ENCODE measurements at regions of chr1 and their contacts with region 1.

Region 1: DNA sequence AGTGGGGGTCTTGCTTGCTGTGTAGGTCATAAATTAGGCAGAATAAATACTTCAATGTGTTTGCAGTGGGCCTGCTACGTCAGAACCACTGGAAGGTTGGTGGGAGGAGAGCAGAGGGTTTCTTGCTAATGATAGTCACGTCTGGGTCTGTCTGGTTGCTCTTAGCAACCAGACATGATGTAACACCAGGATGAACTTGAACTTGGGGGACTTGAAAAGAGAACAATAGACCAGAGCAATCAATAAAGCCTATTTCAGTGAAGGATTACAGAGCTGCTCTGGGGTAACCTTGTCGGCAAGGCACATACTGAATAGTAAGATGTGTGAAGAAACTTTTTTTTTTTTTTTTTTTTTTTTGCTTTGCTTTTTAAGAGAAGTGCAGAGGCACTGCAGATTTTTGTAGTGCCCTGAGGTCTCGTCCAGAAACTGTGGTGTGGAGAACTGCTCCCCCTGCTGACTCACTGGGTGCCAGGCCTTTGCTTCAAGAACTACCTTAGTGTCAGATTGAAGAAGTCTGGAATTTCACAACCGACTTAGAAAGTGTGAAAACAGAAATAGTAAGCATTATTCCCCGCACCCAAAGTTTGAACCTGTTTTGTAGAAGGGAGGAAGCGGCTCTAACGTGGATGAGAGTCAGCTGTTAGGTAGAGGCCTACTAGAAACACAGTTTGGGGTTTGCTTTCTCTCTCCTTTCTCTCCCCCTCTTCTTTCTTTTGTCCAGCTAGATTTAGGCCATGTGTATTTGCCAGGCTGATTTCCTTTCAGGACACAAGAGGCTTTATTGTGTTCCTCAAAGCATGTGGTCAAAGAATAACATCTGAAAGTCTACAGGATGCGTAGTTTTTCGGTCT is 271.6 kb downstream of the TM2D1 start:
- DNase-seq: peak; percentile 85
- H3K4me3 Mint-ChIP-seq: peak overlapping the region; percentile 24
- H3K27ac Mint-ChIP-seq: peak overlapping the region; percentile 94
- H3K4me1 Mint-ChIP-seq: peaks cover 44% of the 10 kb centered on the region
- H3K27me3 Mint-ChIP-seq: no peaks in the 10 kb centered on the region
- CTCF ChIP-seq: peak; percentile 83

Region 2: GRCh38 chr1:60978421-60979357 is 474.6 kb before region 1 on chr1:
- CTCF ChIA-PET with region 1: interaction called, 4 read pairs
- intact Hi-C with region 1: loop called (anchors 1 kb)
- DNase-seq: peak; percentile 66
- H3K4me3 Mint-ChIP-seq: no peak overlapping the region
- H3K27ac Mint-ChIP-seq: no peak overlapping the region
- H3K4me1 Mint-ChIP-seq: no peaks in the 10 kb centered on the region
- H3K27me3 Mint-ChIP-seq: no peaks in the 10 kb centered on the region
- CTCF ChIP-seq: peak; percentile 57

Region 3: DNA sequence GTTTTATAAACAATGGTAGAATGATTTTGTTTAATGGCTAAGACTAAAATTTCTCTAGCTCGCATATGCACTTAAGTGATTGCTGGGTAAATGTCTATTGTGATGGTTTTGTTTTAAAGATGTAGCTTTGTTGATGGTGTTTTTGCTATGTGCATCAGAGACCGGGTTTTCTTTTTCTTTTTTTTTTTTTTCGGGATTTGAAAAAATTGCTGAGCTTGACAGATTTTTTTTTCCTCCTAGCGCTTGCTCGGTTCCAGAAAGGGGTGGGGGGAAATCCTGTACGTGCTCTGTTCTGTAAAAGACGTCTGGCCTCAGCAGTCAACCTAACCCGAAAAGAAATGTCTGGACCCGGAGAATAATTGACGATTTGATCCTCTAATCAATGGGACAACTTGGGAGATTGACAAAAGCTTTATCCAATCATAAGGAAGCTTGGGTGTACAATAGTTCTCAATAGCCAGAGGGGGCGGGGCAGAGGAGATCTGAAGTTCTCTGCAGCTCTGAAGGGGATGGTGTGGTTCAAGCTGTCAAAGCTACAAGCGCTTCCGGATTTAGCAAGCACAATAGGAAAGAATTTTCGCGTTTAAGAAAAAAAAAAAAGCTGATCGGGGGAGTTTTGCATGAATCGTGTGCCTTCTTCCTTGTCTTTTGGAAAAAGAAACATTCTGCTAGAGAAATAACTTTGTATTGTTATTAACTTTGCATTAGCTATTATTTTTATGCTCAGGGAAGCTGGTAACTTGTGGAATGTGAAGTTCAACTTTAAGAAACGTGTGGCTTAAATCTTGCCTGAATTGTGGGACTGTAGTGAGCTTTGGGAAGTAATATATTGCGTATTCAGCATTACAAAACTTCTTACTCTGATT is 375.4 kb before region 1 on chr1:
- CTCF ChIA-PET with region 1: interaction called, 3 read pairs
- intact Hi-C with region 1: loop called (anchors 5 kb)
- DNase-seq: peak; percentile 95
- H3K4me3 Mint-ChIP-seq: peak overlapping the region; percentile 96
- H3K27ac Mint-ChIP-seq: peak overlapping the region; percentile 93
- H3K4me1 Mint-ChIP-seq: peaks cover 53% of the 10 kb centered on the region
- H3K27me3 Mint-ChIP-seq: no peaks in the 10 kb centered on the region
- CTCF ChIP-seq: no peak

Region 4: GRCh38 chr1:61287734-61288133 is 165.6 kb before region 1 on chr1:
- CTCF ChIA-PET with region 1: interaction called, 5 read pairs
- intact Hi-C with region 1: loop called (anchors 1 kb)
- DNase-seq: peak; percentile 53
- H3K4me3 Mint-ChIP-seq: no peak overlapping the region
- H3K27ac Mint-ChIP-seq: peak overlapping the region; percentile 71
- H3K4me1 Mint-ChIP-seq: peaks cover 63% of the 10 kb centered on the region
- H3K27me3 Mint-ChIP-seq: no peaks in the 10 kb centered on the region
- CTCF ChIP-seq: no peak

Region 5: GRCh38 chr1:61352845-61353435 is 100.4 kb before region 1 on chr1:
- CTCF ChIA-PET with region 1: no interaction called
- intact Hi-C with region 1: loop called (anchors 5 kb)
- DNase-seq: no peak
- H3K4me3 Mint-ChIP-seq: no peak overlapping the region
- H3K27ac Mint-ChIP-seq: no peak overlapping the region
- H3K4me1 Mint-ChIP-seq: no peaks in the 10 kb centered on the region
- H3K27me3 Mint-ChIP-seq: no peaks in the 10 kb centered on the region
- CTCF ChIP-seq: no peak

Region 6: DNA sequence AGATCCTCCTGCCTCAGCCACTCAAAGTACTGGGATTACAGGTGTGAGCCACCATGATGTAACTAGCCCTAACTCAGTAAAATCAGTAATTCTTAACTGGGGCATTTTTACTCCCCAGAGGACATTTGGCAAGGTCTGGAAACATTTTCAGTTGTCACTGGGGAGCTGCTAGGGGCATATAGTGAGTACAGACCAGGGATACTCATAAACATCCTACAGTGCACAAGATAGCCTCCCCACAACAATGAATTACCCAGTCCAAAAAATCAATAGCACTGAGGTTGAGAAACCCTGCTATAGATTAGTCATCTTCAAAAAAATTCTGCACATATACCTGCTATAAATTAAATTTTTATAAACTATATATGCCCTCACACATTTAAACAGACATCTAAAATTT is 258.6 kb after region 1 on chr1:
- CTCF ChIA-PET with region 1: no interaction called
- intact Hi-C with region 1: no loop called
- DNase-seq: no peak
- H3K4me3 Mint-ChIP-seq: no peak overlapping the region
- H3K27ac Mint-ChIP-seq: no peak overlapping the region
- H3K4me1 Mint-ChIP-seq: no peaks in the 10 kb centered on the region
- H3K27me3 Mint-ChIP-seq: no peaks in the 10 kb centered on the region
- CTCF ChIP-seq: no peak

Region 7: DNA sequence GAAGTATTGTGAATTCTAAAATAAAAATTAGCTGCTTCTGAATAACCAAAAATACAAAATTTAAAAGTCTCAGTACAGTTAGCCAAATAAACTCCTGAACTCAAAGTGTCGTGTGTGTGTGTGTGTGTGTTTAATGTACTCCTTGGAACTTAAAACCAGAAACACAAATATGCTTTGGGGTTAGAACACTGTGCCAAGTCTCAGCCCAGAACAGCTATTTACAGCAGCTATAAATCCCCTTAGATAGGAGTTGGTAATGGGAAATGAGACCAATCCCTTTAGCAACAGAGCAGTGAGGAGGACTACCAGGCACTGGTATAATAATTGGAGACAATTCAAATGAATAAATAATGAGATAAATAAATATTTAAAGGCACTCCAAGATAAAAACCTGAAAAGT is 372.1 kb after region 1 on chr1:
- CTCF ChIA-PET with region 1: no interaction called
- intact Hi-C with region 1: no loop called
- DNase-seq: no peak
- H3K4me3 Mint-ChIP-seq: no peak overlapping the region
- H3K27ac Mint-ChIP-seq: no peak overlapping the region
- H3K4me1 Mint-ChIP-seq: no peaks in the 10 kb centered on the region
- H3K27me3 Mint-ChIP-seq: no peaks in the 10 kb centered on the region
- CTCF ChIP-seq: no peak

Region 8: GRCh38 chr1:61851849-61852669 is 398.7 kb after region 1 on chr1:
- CTCF ChIA-PET with region 1: no interaction called
- intact Hi-C with region 1: loop called (anchors 2 kb)
- DNase-seq: peak; percentile 20
- H3K4me3 Mint-ChIP-seq: no peak overlapping the region
- H3K27ac Mint-ChIP-seq: no peak overlapping the region
- H3K4me1 Mint-ChIP-seq: no peaks in the 10 kb centered on the region
- H3K27me3 Mint-ChIP-seq: no peaks in the 10 kb centered on the region
- CTCF ChIP-seq: peak; percentile 59